OCI-LY7 (cell line): ENCODE measurements at regions of chr16 and their contacts with region 1.

Region 1: DNA sequence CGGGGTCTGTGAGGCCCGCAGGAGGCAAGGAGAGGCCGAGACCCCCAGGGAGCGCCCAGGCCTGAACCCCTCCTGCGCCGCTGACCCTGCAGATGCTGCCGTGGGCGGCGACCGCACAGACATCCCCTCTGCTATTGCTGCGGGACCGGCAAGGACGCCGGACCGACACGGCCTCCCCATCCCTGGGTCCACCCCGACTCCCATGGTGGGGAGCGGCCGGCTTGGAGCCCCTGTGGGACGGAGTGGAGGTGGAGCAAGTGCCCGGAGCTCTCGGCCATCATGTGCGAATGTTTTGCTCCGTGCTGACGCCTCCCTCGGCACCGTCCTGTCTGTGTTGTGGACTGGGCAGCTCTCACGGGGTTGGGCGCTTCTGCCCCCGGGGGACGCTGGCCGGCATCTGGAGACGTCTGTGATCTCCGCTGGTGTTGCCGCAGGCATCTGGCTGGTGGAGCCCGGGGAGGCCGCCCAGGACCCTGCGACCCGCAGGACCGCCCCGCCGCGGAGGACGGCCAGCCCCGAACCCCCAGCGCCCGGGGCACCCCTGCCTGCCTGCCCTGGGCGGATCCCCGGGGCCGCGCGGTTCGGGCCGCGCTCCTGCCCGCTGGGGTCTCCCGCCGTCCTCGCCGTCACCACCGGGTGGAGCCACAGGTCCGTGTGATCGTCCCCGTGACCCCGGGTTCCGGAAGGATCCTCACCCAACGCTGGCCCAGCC is 12.8 kb upstream of the GNG13 start:
- DNase-seq: peak; percentile 44
- H3K4me3 ChIP-seq: no peak overlapping the region
- H3K27ac ChIP-seq: no peak overlapping the region
- H3K4me1 ChIP-seq: no peaks in the 10 kb centered on the region
- CTCF ChIP-seq: peak; percentile 75

Region 2: GRCh38 chr16:760545-761343 is 52.6 kb before region 1 on chr16 and contains the start of gene MSLN:
- CTCF ChIA-PET with region 1: no interaction called
- POLR2A ChIA-PET with region 1: no interaction called
- intact Hi-C with region 1: no loop called
- DNase-seq: no peak
- H3K4me3 ChIP-seq: no peak within 1 kb of the TSS
- H3K27ac ChIP-seq: no peak within 1 kb of the TSS
- H3K4me1 ChIP-seq: no peaks in the 10 kb centered on the region
- CTCF ChIP-seq: no peak
- total RNA-seq, gene MSLN: 0.13 TPM in 1 of 2 replicates, not detected in the other

Region 3: DNA sequence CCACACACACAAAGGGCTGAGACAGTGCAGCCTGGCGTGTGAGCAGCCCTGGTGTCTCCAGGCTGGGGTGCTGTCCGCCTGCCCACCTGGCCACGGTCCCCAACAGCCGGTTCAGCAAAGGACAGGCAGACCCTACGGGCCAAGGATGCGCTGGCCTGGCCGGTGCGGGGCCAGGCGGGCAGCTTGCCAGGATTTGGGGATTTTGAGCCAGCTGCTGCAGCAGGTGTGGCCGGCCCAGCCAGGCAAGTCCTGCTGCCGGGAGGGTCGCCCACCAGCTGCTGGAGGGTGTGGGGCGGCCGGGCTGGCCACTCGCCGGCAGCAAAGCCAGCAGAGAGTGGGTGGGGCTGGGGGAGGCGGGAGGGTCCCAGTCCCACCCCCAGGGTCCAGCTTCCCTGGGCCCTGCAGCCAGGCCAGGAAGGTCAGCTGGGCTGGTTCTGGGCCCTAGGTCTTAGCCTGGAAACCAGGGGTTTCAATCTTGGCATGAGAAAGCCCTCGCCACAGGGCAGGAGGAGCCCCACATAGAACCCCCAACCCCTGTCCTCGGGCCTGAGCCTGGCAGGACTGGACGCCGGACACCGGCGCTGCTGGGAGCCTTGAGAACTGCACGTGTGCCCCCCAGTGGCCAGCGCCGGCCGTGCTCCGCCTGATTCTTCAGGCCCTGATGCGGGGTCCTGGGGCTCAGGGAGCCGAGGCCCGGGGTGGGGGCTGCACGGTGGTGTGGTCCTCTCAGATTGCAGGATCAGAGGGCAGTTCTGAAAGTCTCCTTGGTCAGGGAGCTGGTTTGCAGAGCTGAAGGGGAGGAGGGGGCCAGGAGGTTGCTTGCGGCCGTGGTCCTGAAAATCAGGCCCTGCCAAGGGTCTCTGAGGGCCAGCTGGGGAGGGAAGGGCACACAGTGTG is 241.5 kb after region 1 on chr16:
- CTCF ChIA-PET with region 1: no interaction called
- POLR2A ChIA-PET with region 1: no interaction called
- intact Hi-C with region 1: loop called (anchors 2 kb)
- DNase-seq: peak; percentile 7
- H3K4me3 ChIP-seq: no peak overlapping the region
- H3K27ac ChIP-seq: no peak overlapping the region
- H3K4me1 ChIP-seq: no peaks in the 10 kb centered on the region
- CTCF ChIP-seq: peak; percentile 62

Region 4: GRCh38 chr16:1244881-1245280 is 431.5 kb after region 1 on chr16:
- CTCF ChIA-PET with region 1: no interaction called
- POLR2A ChIA-PET with region 1: no interaction called
- intact Hi-C with region 1: no loop called
- DNase-seq: no peak
- H3K4me3 ChIP-seq: no peak overlapping the region
- H3K27ac ChIP-seq: no peak overlapping the region
- H3K4me1 ChIP-seq: no peaks in the 10 kb centered on the region
- CTCF ChIP-seq: no peak